CD8-positive, alpha-beta T cell (primary cell): ENCODE measurements at regions of chr2 and their contacts with region 1.

Region 1: DNA sequence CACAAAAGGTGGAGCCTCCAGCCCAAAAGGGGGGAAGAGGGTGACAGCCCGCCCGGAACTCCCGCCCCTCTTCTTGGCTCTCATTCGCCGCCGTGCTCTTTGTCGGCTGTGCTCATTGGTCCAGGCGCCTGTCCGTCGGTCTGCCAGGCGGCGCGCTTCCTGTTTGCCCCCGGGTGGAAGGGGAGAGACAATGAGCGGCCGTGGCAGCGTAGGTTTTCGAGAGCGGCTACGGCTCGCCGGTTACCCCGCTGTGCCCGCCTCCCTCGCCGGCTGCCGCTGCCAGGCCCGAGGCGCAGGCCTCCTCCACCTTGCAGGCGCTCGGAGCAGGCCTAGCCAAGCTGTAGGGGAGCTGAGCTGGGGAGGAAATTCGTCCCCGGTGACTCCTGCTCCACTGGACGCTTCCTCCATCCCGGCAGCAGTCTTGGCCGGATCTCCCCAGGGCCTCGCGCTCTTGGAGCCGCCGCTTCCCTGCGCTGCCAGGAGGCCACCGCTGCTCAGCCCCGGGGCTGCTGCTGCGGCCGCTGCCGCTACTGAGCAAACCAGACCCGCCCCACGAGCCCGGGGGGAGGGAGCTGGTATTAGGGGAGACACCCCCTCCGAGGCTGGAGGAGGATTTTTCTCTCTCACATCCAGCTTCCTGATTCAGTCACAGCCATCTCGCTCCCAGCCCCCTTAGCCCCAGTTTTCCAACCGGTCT is at the start of gene SP3:
- DNase-seq: peak; percentile 89 to 98 (median 96)
- ATAC-seq: peak; percentile 59
- H3K4me3 ChIP-seq: peak within 1 kb of the TSS; percentile 76 to 89
- H3K4me3 Mint-ChIP-seq: peak within 1 kb of the TSS; percentile 88
- H3K27ac ChIP-seq: peak within 1 kb of the TSS; percentile 86 to 96
- H3K27ac Mint-ChIP-seq: peak within 1 kb of the TSS; percentile 94
- H3K4me1 ChIP-seq: peaks cover 27% of the 10 kb centered on the region
- H3K4me1 Mint-ChIP-seq: peaks cover 33% of the 10 kb centered on the region
- H3K27me3 ChIP-seq: no peaks in the 10 kb centered on the region
- H3K27me3 Mint-ChIP-seq: no peaks in the 10 kb centered on the region
- CTCF ChIP-seq: no peak
- total RNA-seq, gene SP3: 166 to 169 TPM

Region 2: DNA sequence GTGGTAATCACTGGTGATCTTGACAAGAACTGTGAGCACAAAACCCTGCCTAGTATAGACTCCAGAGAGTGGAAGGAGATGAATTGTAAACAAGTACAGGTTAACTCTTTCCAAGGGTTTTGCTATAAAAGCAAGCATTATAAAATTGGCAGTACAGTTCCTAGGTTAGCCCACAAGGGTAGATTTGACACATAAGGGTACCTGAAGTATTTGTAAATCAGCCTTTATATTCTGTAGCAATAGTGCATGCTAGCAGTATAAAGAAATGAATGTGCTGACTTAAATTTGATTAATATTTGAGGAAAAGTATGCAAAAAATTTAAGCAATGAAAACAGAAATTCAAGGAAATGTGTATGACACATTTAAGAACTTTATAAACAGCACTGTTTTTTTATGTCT is 42.7 kb before region 1 on chr2:
- CTCF ChIA-PET with region 1: interaction called, 4 read pairs
- POLR2A ChIA-PET with region 1: no interaction called
- intact Hi-C with region 1: loop called (anchors 5 kb)
- DNase-seq: no peak
- ATAC-seq: no peak
- H3K4me3 ChIP-seq: no peak overlapping the region
- H3K4me3 Mint-ChIP-seq: no peak overlapping the region
- H3K27ac ChIP-seq: no peak overlapping the region
- H3K27ac Mint-ChIP-seq: peak overlapping the region; percentile 84
- H3K4me1 ChIP-seq: peaks cover 38% of the 10 kb centered on the region
- H3K4me1 Mint-ChIP-seq: peaks cover 74% of the 10 kb centered on the region
- H3K27me3 ChIP-seq: no peaks in the 10 kb centered on the region
- H3K27me3 Mint-ChIP-seq: no peaks in the 10 kb centered on the region
- CTCF ChIP-seq: no peak

Region 3: DNA sequence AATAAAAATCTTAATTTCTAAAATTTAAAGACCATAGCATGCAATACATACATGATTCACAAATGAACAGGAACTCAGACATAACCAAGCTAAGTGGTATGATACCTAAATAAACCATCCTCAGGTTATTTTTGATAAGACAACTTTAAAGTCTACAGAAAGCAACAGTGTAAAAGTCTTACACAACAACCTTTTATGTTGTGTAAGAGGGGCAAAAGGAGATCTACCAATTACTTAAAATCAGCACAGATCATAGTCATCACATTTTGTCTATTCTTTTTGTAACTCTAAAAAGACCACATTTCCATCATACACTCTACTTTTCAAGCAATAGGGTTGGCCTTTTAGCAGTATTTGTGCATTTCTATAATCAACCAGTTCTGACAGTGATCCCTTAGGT is 16.6 kb before region 1 on chr2:
- CTCF ChIA-PET with region 1: interaction called, 3 read pairs
- POLR2A ChIA-PET with region 1: interaction called, 4 read pairs
- intact Hi-C with region 1: loop called (anchors 2 kb)
- DNase-seq: no peak
- ATAC-seq: no peak
- H3K4me3 ChIP-seq: no peak overlapping the region
- H3K4me3 Mint-ChIP-seq: no peak overlapping the region
- H3K27ac ChIP-seq: no peak overlapping the region
- H3K27ac Mint-ChIP-seq: no peak overlapping the region
- H3K4me1 ChIP-seq: peaks cover 64% of the 10 kb centered on the region
- H3K4me1 Mint-ChIP-seq: peaks cover 90% of the 10 kb centered on the region
- H3K27me3 ChIP-seq: no peaks in the 10 kb centered on the region
- H3K27me3 Mint-ChIP-seq: no peaks in the 10 kb centered on the region
- CTCF ChIP-seq: no peak

Region 4: GRCh38 chr2:173979751-173980351 is 14.4 kb after region 1 on chr2:
- CTCF ChIA-PET with region 1: no interaction called
- POLR2A ChIA-PET with region 1: no interaction called
- intact Hi-C with region 1: no loop called
- DNase-seq: no peak
- ATAC-seq: no peak
- H3K4me3 ChIP-seq: no peak overlapping the region
- H3K4me3 Mint-ChIP-seq: no peak overlapping the region
- H3K27ac ChIP-seq: no peak overlapping the region
- H3K27ac Mint-ChIP-seq: no peak overlapping the region
- H3K4me1 ChIP-seq: no peaks in the 10 kb centered on the region
- H3K4me1 Mint-ChIP-seq: no peaks in the 10 kb centered on the region
- H3K27me3 ChIP-seq: peaks cover 0 to 2% of the 10 kb centered on the region in 2 experiments
- H3K27me3 Mint-ChIP-seq: peaks cover 14% of the 10 kb centered on the region
- CTCF ChIP-seq: no peak

Region 5: DNA sequence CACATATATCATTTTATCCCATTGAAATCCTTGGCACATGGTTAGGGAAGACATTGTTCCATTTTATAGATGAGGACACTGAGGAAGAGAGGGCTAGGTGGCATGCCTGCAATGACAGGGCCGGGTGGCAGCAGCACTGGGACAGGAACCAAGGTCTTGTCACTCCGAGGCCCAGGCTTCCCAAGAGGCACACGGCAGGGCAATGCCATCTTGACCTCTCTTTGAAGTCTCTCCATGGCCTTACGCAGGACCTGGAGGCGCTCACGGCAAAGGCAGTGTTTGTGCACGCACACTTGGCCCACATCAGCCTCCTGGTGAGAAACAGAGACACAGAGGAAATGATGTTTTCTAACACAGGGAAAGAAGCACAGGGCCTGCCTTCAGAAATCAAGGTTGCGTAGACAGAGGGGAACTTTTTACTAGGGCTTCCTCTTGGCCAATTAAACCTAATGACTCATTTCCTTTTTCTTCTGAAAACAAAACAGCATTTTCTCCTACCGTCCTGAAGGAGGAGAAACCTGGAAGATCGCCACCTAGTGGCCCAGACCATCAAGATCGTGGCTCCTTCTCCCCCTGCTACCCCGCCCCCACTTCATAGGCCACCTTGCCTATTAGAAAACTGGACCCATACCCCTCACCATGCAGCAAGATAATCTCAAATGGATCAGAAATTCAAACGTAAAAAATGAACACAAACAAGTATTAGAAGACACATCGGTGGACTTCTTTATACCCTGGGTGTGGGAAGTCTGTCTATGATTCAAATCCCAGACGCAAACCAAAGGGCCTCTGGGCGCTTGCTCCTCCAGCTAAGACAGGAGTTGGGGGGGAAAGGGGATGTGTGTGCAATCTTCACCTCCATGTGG is 74.3 kb after region 1 on chr2:
- CTCF ChIA-PET with region 1: interaction called, 3 read pairs
- POLR2A ChIA-PET with region 1: interaction called, 3 read pairs
- intact Hi-C with region 1: loop called (anchors 1 to 2 kb)
- DNase-seq: peak; percentile 54 to 93 (median 85)
- ATAC-seq: peak; percentile 94
- H3K4me3 ChIP-seq: peak overlapping the region; percentile 3 to 43
- H3K4me3 Mint-ChIP-seq: peak overlapping the region; percentile 69
- H3K27ac ChIP-seq: peak overlapping the region; percentile 47 to 84
- H3K27ac Mint-ChIP-seq: peak overlapping the region; percentile 87
- H3K4me1 ChIP-seq: peaks cover 5% of the 10 kb centered on the region
- H3K4me1 Mint-ChIP-seq: peaks cover 8% of the 10 kb centered on the region
- H3K27me3 ChIP-seq: no peaks in the 10 kb centered on the region
- H3K27me3 Mint-ChIP-seq: no peaks in the 10 kb centered on the region
- CTCF ChIP-seq: peak; percentile 67

Region 6: GRCh38 chr2:174487108-174487819 is 521.8 kb after region 1 on chr2:
- CTCF ChIA-PET with region 1: no interaction called
- POLR2A ChIA-PET with region 1: no interaction called
- intact Hi-C with region 1: loop called in 1 of 2 experiments (anchors 10 kb)
- DNase-seq: peak; percentile 77 to 98 (median 97)
- ATAC-seq: peak; percentile 74
- H3K4me3 ChIP-seq: peak overlapping the region; percentile 83 to 86
- H3K4me3 Mint-ChIP-seq: peak overlapping the region; percentile 97
- H3K27ac ChIP-seq: peak overlapping the region; percentile 69 to 85
- H3K27ac Mint-ChIP-seq: peak overlapping the region; percentile 88
- H3K4me1 ChIP-seq: peaks cover 59% of the 10 kb centered on the region
- H3K4me1 Mint-ChIP-seq: peaks cover 73% of the 10 kb centered on the region
- H3K27me3 ChIP-seq: no peaks in the 10 kb centered on the region
- H3K27me3 Mint-ChIP-seq: no peaks in the 10 kb centered on the region
- CTCF ChIP-seq: no peak

Region 7: DNA sequence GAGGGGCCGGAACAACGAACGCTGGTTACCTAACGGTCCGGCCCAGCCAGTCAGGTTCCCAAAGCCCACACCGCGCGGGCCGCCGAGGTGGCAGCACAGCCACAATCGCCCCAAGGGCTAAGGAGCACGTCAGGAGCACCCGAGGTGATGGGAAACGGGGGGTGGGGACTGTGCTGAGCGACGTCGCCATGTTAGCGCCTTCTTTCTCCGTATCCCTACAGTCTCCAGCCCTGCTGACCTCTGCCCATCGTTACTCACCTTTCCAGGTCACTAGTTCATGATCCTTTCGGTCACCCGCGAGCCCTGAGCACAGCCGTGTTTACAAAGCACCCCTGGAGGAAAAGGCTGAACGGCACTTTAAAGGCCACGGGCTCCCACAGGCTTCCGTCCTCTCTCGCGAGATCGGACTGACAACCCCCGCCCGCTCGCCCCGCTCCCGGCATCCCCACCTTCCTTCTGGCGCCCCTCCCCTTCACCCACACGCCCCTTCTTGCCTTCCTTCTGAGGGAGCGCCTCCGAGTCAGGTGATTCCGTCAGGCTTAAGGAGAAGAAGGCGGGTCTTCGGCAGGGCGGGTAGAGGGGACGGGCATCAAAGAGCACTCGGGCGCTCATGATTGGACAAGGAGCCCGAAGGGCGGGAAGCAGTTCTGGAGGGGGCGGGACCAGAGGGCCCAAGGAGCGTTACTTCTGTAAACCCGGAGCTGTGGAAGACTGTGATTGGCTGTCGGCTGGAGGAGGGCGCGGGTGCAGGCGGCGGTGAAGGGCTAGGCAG is 1202.5 kb after region 1 on chr2 and contains the start of gene ATF2:
- CTCF ChIA-PET with region 1: no interaction called
- POLR2A ChIA-PET with region 1: no interaction called
- intact Hi-C with region 1: loop called (anchors 2 to 5 kb)
- DNase-seq: peak; percentile 94 to 100 (median 96)
- ATAC-seq: peak; percentile 91
- H3K4me3 ChIP-seq: peak within 1 kb of the TSS; percentile 95 to 99
- H3K4me3 Mint-ChIP-seq: peak within 1 kb of the TSS; percentile 100
- H3K27ac ChIP-seq: peak within 1 kb of the TSS; percentile 87 to 92
- H3K27ac Mint-ChIP-seq: peak within 1 kb of the TSS; percentile 99
- H3K4me1 ChIP-seq: peaks cover 19% of the 10 kb centered on the region
- H3K4me1 Mint-ChIP-seq: peaks cover 48% of the 10 kb centered on the region
- H3K27me3 ChIP-seq: no peaks in the 10 kb centered on the region
- H3K27me3 Mint-ChIP-seq: no peaks in the 10 kb centered on the region
- CTCF ChIP-seq: no peak
- total RNA-seq, gene ATF2: 42.9 to 43.6 TPM